HepG2 (cell line): ENCODE measurements at regions of chr16 and their contacts with region 1.

Region 1: DNA sequence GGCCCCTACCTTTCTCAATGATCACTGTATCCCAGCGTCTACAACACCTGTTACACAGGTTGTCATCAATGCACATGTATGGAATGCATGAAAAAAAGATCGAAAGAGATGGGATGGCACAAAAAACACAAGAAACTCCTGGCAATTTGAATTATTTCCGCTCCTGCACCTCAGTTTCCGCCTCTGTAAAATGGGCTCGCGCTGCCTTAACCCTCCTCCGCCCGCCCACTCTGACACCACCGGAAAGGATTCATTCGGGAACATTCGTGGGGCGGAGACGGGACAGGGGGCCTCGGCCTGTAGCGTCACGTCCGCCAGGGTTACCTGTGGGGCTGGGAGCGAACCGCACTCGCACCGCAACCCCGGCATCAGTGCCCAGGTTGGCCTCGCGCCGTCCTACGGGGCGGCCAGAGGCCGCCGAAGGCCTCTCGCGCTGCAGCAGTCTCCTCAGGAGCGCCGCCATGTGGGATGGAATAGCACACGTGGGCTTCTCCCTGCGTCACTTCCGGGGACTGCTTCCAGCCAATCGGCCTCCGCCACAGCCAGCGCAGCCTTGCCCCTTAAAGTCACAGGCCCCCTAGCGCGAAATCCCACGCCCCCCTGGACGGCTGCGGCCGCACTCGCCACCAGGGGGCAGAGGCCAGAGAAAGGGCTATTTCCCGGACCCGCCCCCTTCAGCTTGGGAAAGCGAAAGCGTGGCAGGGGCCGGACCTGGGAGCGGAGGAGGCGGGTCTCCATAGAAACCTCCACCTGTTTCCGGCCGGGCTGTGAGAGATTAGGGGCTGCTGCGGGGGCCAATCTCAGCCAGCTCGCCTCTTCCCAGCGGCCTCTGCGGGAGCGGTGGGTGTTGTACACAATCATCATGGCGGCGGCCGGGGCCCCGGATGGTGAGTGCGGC is at the starts of genes EARS2 and UBFD1:
- DNase-seq: peak; percentile 100
- ATAC-seq: peak; percentile 96
- H3K4me3 ChIP-seq: peak within 1 kb of the TSS; percentile 96 to 98 (median 97)
- H3K27ac ChIP-seq: peak within 1 kb of the TSS; percentile 86
- H3K4me1 ChIP-seq: peaks cover 48% of the 10 kb centered on the region
- H3K27me3 ChIP-seq: peaks cover 0 to 3% of the 10 kb centered on the region in 2 experiments; a peak in 1 of 5 replicates
- CTCF ChIP-seq: peak; percentile 100
- EP300 ChIP-seq: peak in 1 of 2 experiments; percentile 70; a peak in 3 of 4 replicates
- POLR2A ChIP-seq: peak; percentile 85 to 98
- RAD21 ChIP-seq: peak; percentile 76
- total RNA-seq, gene EARS2: 80.4 and 84.2 TPM in 2 replicates
- total RNA-seq, gene UBFD1: 111 and 142 TPM in 2 replicates

Region 2: DNA sequence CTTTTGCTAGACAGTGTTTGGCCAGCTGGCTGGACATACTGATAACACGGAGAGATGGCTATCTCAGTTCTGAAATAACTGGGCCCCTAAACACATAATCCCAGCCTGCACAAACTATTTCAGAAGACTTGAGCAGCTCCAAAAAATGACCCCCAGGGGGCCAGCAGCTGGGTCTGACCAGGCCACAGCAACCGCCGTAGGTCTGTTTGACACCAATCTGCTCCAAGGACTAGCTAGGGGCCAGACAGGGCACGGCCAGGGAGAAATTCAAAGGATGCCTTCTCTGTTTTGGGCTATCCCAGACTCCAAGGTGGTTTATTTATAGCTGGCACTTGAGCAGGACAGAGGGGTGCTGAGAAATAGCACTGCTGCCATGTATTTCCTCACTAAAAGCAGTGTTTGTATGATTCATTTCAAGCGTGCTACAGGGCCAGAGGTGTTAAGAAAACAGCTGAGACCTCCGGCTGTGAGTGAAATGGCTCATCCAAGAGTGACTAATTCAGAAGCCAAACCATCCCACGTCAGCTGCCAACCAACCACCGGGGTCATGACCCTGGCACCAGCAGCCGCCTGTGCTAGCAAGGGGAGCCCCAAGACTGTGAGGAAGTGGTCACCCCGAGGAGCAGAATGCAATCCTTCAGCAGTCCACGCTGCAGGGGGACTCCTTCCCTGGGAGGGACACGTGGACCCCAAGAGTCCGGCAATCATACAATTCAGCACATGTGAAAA is 52.5 kb before region 1 on chr16:
- CTCF ChIA-PET with region 1: interaction called, 5 read pairs
- POLR2A ChIA-PET with region 1: interaction called, 10 read pairs
- in situ Hi-C with region 1: no loop called
- intact Hi-C with region 1: no loop called
- DNase-seq: peak; percentile 58
- ATAC-seq: peak; percentile 62
- H3K4me3 ChIP-seq: no peak overlapping the region
- H3K27ac ChIP-seq: no peak overlapping the region
- H3K4me1 ChIP-seq: peaks cover 68% of the 10 kb centered on the region
- H3K27me3 ChIP-seq: no peaks in the 10 kb centered on the region; a peak in 1 of 5 replicates
- CTCF ChIP-seq: no peak
- EP300 ChIP-seq: no peak
- POLR2A ChIP-seq: no peak
- RAD21 ChIP-seq: no peak

Region 3: DNA sequence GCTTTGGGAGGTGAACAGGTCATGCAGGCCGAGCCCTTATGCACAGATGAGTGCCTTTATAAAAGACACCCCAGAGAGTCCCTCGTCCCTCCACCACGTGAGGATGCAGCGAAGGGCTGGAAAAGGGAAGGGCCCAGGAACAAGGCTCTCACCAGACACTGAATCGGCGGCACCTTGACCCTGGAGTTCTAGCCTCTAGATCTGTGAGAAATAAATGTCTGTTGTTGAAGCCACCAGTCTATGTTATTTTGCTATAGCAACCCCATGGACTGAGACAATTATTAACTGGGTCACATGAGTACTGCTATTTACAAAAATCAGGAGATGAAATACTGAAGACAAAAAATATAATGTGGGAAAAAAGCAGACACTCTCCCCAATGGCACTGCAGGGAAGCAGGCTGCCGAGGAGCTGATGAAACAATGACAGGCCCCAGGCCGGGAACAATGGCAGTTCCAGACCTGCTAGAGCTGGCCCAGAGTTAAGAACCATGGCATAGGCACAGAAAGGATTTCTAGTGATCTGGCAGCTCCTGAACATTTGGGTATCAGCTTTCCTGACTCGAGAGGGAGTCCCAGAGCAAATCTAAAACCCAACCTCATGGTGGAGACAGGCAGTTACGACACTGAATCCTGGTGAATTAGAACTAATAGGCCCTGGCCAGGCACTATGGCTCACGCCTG is 29.0 kb before region 1 on chr16:
- CTCF ChIA-PET with region 1: no interaction called
- POLR2A ChIA-PET with region 1: interaction called, 10 read pairs
- in situ Hi-C with region 1: no loop called
- intact Hi-C with region 1: no loop called
- DNase-seq: peak; percentile 67
- ATAC-seq: peak; percentile 68
- H3K4me3 ChIP-seq: no peak overlapping the region
- H3K27ac ChIP-seq: peak overlapping the region; percentile 62
- H3K4me1 ChIP-seq: peaks cover 15% of the 10 kb centered on the region
- H3K27me3 ChIP-seq: no peaks in the 10 kb centered on the region
- CTCF ChIP-seq: no peak
- EP300 ChIP-seq: no peak
- POLR2A ChIP-seq: no peak
- RAD21 ChIP-seq: no peak

Region 4: GRCh38 chr16:23539984-23540816 is 16.9 kb before region 1 on chr16:
- CTCF ChIA-PET with region 1: interaction called, 8 read pairs
- POLR2A ChIA-PET with region 1: interaction called, 96 read pairs
- in situ Hi-C with region 1: no loop called
- intact Hi-C with region 1: loop called (anchors 2 kb)
- DNase-seq: peak; percentile 99
- ATAC-seq: peak; percentile 95
- H3K4me3 ChIP-seq: no peak overlapping the region
- H3K27ac ChIP-seq: peak overlapping the region; percentile 91
- H3K4me1 ChIP-seq: peaks cover 47% of the 10 kb centered on the region
- H3K27me3 ChIP-seq: no peaks in the 10 kb centered on the region
- CTCF ChIP-seq: peak; percentile 25
- EP300 ChIP-seq: peak; percentile 88 to 96
- POLR2A ChIP-seq: peak in 1 of 2 experiments; percentile 17; a peak in 1 of 4 replicates
- RAD21 ChIP-seq: no peak

Region 5: GRCh38 chr16:23640931-23641765 is 84.0 kb after region 1 on chr16 and contains the starts of genes DCTN5 and PALB2:
- CTCF ChIA-PET with region 1: no interaction called
- POLR2A ChIA-PET with region 1: interaction called, 10 read pairs
- in situ Hi-C with region 1: no loop called
- intact Hi-C with region 1: loop called (anchors 1 kb)
- DNase-seq: peak; percentile 98
- ATAC-seq: peak; percentile 98
- H3K4me3 ChIP-seq: peak within 1 kb of the TSS; percentile 91 to 97 (median 97)
- H3K27ac ChIP-seq: peak within 1 kb of the TSS; percentile 89
- H3K4me1 ChIP-seq: peaks cover 34% of the 10 kb centered on the region
- H3K27me3 ChIP-seq: no peaks in the 10 kb centered on the region; a peak in 1 of 5 replicates
- CTCF ChIP-seq: peak; percentile 31
- EP300 ChIP-seq: peak in 1 of 2 experiments; percentile 63; a peak in 3 of 4 replicates
- POLR2A ChIP-seq: peak; percentile 88 to 93
- RAD21 ChIP-seq: peak; percentile 62
- total RNA-seq, gene DCTN5: 207 and 352 TPM in 2 replicates
- total RNA-seq, gene PALB2: 40.9 and 58.5 TPM in 2 replicates

Region 6: GRCh38 chr16:23987443-23987842 is 430.3 kb after region 1 on chr16:
- CTCF ChIA-PET with region 1: no interaction called
- POLR2A ChIA-PET with region 1: no interaction called
- in situ Hi-C with region 1: no loop called
- intact Hi-C with region 1: no loop called
- DNase-seq: no peak
- ATAC-seq: no peak
- H3K4me3 ChIP-seq: no peak overlapping the region
- H3K27ac ChIP-seq: no peak overlapping the region
- H3K4me1 ChIP-seq: no peaks in the 10 kb centered on the region
- H3K27me3 ChIP-seq: no peaks in the 10 kb centered on the region; a peak in 2 of 5 replicates
- CTCF ChIP-seq: no peak
- EP300 ChIP-seq: no peak
- POLR2A ChIP-seq: no peak
- RAD21 ChIP-seq: no peak